ENCODE measurements at regions of chr15 and their contacts with region 1.

Region 1: DNA sequence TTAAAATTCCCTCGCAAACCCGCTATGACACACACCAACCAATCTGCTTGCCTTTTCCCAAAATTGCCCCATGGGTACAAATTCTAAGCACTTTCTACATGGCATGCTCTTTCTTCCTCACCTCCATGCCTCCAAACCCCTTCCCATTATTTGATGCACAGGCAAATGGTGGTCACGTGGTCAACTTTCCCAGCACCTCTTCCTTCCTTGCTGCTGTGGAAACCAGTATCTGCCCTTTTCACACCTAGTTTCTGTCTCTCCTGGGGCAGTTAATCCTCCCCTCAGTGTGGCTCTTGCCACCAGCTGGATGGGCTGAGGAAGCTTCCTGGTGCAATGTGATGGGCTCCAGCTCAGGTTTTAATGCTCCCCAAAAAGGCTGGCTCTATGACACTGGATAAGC is 38.4 kb upstream of the ST8SIA2 start:
- DNase-seq: no peak
- ATAC-seq: no peak
- H3K4me3 ChIP-seq: no peak overlapping the region
- H3K27ac ChIP-seq: no peak overlapping the region
- H3K4me1 ChIP-seq: no peaks in the 10 kb centered on the region
- H3K27me3 ChIP-seq: no peaks in the 10 kb centered on the region
- CTCF ChIP-seq: no peak
- POLR2A ChIP-seq: no peak

Region 2: GRCh38 chr15:92294759-92295158 is 60.5 kb before region 1 on chr15:
- intact Hi-C with region 1: loop called in 1 of 10 experiments (anchors 10 kb)
- DNase-seq: no peak
- ATAC-seq: no peak
- H3K4me3 ChIP-seq: no peak overlapping the region
- H3K27ac ChIP-seq: no peak overlapping the region
- H3K4me1 ChIP-seq: peaks cover 0 to 20% (median 0%) of the 10 kb centered on the region in 12 donors
- H3K27me3 ChIP-seq: no peaks in the 10 kb centered on the region
- CTCF ChIP-seq: no peak
- POLR2A ChIP-seq: no peak

Measured in heart left ventricle (tissue), 16 donors.